ENCODE measurements at regions of chr6 and their contacts with region 1.

Region 1: GRCh38 chr6:142537612-142538478 is 236.0 kb downstream of the ADGRG6 start:
- DNase-seq: peak; percentile 34
- ATAC-seq: peak; percentile 59; the same call in 1 of the 2 replicates
- H3K4me3 ChIP-seq: no peak overlapping the region
- H3K27ac ChIP-seq: no peak overlapping the region
- H3K4me1 ChIP-seq: peaks cover under 1% of the 10 kb centered on the region; the same call in 1 of the 2 replicates
- H3K27me3 ChIP-seq: peaks cover 2% of the 10 kb centered on the region
- CTCF ChIP-seq: peak; percentile 58
- POLR2A ChIP-seq: no peak
- RAD21 ChIP-seq: peak; percentile 64

Region 2: GRCh38 chr6:142146828-142147662 is 390.8 kb before region 1 on chr6 and contains the starts of genes NMBR and VTA1:
- CTCF ChIA-PET with region 1: no interaction called
- POLR2A ChIA-PET with region 1: no interaction called
- dilution Hi-C with region 1: no loop called
- in situ Hi-C with region 1: no loop called
- intact Hi-C with region 1: loop called (anchors 5 kb)
- DNase-seq: peak; percentile 100
- ATAC-seq: peak; percentile 97
- H3K4me3 ChIP-seq: peak within 1 kb of the TSS; percentile 77
- H3K27ac ChIP-seq: peak within 1 kb of the TSS; percentile 78
- H3K4me1 ChIP-seq: peaks cover 6% of the 10 kb centered on the region
- H3K27me3 ChIP-seq: no peaks in the 10 kb centered on the region
- CTCF ChIP-seq: peak; percentile 97
- POLR2A ChIP-seq: peak; percentile 56; the same call in 1 of the 2 replicates
- RAD21 ChIP-seq: peak; percentile 91
- total RNA-seq, gene NMBR: not detected in 2 replicates
- total RNA-seq, gene VTA1: 104 and 120 TPM in 2 replicates

Region 3: GRCh38 chr6:143060354-143060805 is 522.5 kb after region 1 on chr6:
- CTCF ChIA-PET with region 1: no interaction called
- POLR2A ChIA-PET with region 1: no interaction called
- dilution Hi-C with region 1: no loop called
- in situ Hi-C with region 1: no loop called
- intact Hi-C with region 1: no loop called
- DNase-seq: peak; percentile 81
- ATAC-seq: peak; percentile 90
- H3K4me3 ChIP-seq: peak overlapping the region; percentile 97
- H3K27ac ChIP-seq: peak overlapping the region; percentile 86
- H3K4me1 ChIP-seq: peaks cover 7% of the 10 kb centered on the region
- H3K27me3 ChIP-seq: no peaks in the 10 kb centered on the region
- CTCF ChIP-seq: no peak
- POLR2A ChIP-seq: peak; percentile 42; the same call in 1 of the 2 replicates
- RAD21 ChIP-seq: no peak